PC-9 (cell line): ENCODE measurements at regions of chr4 and their contacts with region 1.

Region 1: DNA sequence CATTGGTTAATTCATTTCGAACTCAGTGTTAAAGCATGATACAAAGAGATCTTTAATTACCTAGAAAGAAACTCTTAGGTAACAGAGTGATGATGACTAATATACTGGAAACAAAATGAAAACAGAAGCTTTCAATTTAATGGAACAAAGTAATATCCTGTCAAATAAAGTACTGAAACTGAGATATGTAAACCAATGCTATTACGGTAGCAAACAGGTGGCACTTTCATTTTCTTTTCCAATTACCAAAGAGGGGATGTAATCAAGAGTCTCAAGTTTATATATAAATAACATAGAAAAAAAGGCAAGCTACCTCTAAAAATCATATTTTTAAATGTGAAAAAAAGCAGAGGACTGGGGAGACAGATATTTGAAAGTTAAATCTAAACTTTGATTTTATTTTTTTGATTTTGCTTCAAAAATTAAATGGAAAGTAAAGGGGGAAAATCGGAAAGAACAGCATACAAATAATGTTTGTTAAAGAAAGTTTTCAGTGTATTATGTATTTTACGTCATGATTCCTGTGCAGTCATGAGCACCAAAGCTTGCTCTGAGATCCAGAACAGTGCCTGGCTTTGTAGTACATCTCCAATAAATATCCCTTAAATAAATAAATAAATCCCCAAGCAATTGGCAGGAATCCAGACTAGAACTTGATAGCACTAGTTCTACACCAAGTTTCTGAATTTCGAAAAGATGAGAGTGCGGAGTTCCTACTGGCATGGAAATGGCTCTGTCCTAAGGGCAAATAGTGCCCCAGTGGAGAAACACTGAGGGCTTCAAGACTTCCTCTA is 25.0 kb upstream of the RAPGEF2 start:
- DNase-seq: no peak
- H3K4me3 ChIP-seq: no peak overlapping the region
- H3K27ac ChIP-seq: no peak overlapping the region
- H3K4me1 ChIP-seq: no peaks in the 10 kb centered on the region
- H3K27me3 ChIP-seq: no peaks in the 10 kb centered on the region
- CTCF ChIP-seq: no peak

Region 2: DNA sequence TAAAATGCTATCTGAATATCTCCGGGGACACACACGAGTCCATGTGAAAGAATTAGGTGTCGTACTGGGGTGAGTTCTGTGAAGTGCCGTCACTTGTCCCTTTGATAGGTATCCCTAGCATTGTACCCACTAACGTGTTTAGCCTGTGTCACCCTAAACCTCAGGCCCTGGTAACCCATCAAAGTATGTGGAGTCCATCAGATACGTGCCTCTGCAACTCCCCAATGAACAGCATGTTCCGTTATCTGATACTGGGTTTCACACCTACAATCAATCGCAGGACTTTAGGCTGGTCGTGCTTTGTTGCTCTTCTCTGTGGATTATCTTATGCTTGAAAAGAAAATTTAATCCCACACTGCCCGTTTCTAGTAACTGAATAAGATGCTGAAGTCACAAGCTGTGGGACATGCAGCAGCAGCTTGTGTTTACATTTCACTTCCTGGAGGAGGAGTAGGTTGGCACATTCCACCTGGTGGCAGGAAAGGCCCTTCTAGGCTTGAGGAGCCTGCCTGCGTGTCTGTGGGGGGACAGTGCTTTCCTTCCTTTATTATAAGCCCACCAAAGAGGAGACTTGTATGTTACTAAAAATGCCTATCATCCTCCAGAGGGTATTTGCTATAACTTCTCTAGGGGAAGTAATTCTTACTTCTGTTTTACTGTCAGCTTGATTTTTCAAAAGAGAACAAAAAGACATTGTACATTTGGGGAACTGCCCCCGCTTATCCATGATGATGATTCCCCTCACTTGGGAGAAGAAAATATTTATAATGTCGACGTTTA is 181.9 kb before region 1 on chr4:
- CTCF ChIA-PET with region 1: no interaction called
- POLR2A ChIA-PET with region 1: no interaction called
- intact Hi-C with region 1: no loop called
- DNase-seq: peak in 1 of 2 experiments; percentile 8
- H3K4me3 ChIP-seq: no peak overlapping the region
- H3K27ac ChIP-seq: no peak overlapping the region
- H3K4me1 ChIP-seq: no peaks in the 10 kb centered on the region
- H3K27me3 ChIP-seq: no peaks in the 10 kb centered on the region
- CTCF ChIP-seq: no peak

Region 3: DNA sequence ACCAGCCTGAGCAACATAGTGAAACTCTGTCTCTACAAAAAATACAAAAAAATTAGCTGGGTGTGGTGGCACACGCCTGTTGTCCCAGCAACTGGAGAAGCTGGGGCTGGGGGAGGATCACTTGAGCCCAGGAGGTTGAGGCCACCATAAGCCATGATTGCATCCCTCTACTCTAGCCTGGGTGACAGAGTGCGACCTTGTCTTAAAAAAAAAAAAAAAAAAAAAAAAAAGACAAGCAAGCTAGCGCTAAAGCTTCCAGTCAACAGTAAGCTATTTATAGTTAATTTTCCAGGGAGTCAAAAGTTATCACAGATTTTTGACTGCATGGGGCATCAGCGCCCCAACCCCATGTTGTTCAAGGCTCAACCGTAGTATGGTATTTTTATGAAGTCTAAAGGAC is 298.4 kb after region 1 on chr4:
- CTCF ChIA-PET with region 1: no interaction called
- POLR2A ChIA-PET with region 1: interaction called, 16 read pairs
- intact Hi-C with region 1: no loop called
- DNase-seq: no peak
- H3K4me3 ChIP-seq: no peak overlapping the region
- H3K27ac ChIP-seq: no peak overlapping the region
- H3K4me1 ChIP-seq: no peaks in the 10 kb centered on the region
- H3K27me3 ChIP-seq: no peaks in the 10 kb centered on the region
- CTCF ChIP-seq: no peak